ENCODE measurements at regions of chr1 and their contacts with region 1.

Region 1: GRCh38 chr1:150578965-150579798 is at the start of gene MCL1:
- DNase-seq: peak; percentile 95
- H3K4me3 Mint-ChIP-seq: peak within 1 kb of the TSS; percentile 93
- H3K27ac Mint-ChIP-seq: peak within 1 kb of the TSS; percentile 98
- H3K4me1 Mint-ChIP-seq: peaks cover 27% of the 10 kb centered on the region
- H3K27me3 Mint-ChIP-seq: peaks cover 2% of the 10 kb centered on the region
- total RNA-seq, gene MCL1: 280 to 288 TPM

Region 2: DNA sequence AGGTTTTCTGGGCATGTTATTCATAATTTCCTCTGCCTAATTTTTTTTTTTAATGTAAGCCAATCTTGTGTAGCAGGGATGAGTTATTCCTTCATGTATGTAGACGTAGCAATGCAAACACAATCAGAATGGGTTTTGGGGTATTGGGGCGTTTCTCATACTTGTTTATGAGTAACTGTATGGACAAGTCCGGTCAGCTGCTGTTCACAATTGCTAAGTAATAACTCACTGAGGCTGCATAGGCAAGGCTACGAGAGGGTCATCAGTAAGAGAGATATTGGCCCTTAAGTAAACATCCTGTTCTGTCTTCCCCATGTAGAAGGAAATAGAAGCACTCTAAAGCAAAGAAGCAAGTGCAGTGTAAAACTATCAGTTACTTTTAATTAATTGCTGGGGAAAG is 101.4 kb before region 1 on chr1:
- CTCF ChIA-PET with region 1: no interaction called
- POLR2A ChIA-PET with region 1: no interaction called
- intact Hi-C with region 1: no loop called
- DNase-seq: no peak
- H3K4me3 Mint-ChIP-seq: no peak overlapping the region
- H3K27ac Mint-ChIP-seq: no peak overlapping the region
- H3K4me1 Mint-ChIP-seq: peaks cover 11% of the 10 kb centered on the region
- H3K27me3 Mint-ChIP-seq: no peaks in the 10 kb centered on the region

Region 3: GRCh38 chr1:150515328-150516048 is 63.7 kb before region 1 on chr1 and contains the start of gene FALEC:
- CTCF ChIA-PET with region 1: no interaction called
- POLR2A ChIA-PET with region 1: no interaction called
- intact Hi-C with region 1: no loop called
- DNase-seq: peak; percentile 94
- H3K4me3 Mint-ChIP-seq: peak within 1 kb of the TSS; percentile 83
- H3K27ac Mint-ChIP-seq: peak within 1 kb of the TSS; percentile 33
- H3K4me1 Mint-ChIP-seq: peaks cover 11% of the 10 kb centered on the region
- H3K27me3 Mint-ChIP-seq: no peaks in the 10 kb centered on the region
- total RNA-seq, gene FALEC: not detected

Region 4: DNA sequence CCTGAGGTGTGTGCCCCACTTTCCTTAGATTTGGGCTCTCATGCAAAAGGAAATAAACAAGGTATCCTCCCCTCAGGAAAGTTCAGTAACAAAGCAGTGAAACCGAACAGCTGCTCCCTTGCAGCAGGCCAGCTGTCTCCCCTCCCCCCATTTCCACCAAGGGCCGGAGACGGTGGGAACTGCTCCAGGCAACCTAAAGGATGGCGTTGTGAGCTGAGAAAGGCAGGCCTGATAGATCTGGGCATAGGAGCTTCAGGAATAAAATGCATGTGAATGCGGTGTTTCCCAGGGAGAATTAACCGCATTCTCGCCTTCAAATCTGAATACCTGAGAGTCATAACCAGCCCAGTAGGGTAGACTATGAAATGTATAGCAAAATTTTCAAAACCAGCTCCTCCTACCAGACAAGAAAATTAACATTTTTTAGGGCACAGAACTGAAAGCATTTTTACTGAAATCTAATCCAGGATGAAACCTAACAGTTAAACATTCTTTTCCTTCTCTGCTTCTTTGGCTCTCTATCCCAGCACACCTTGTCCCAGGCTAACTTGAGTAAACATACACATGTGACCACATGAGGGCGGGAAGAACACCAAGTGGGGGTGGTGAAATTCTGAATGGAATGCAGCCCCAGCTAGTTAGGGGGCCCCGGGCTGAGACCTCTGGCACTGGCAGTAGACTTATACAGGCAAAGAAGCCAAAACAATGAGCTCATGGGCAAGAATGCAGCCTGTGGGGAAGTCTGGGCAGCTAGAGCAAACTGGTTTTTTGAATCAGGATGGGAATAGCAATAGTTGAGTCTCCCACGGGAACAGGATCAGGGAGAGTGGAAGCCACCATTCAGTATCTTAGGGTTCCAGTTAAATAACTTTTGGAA is 11.2 kb before region 1 on chr1:
- CTCF ChIA-PET with region 1: interaction called, 276 read pairs
- POLR2A ChIA-PET with region 1: interaction called, 527 read pairs
- intact Hi-C with region 1: loop called (anchors 1 kb)
- DNase-seq: peak; percentile 68
- H3K4me3 Mint-ChIP-seq: peak overlapping the region; percentile 69
- H3K27ac Mint-ChIP-seq: peak overlapping the region; percentile 98
- H3K4me1 Mint-ChIP-seq: peaks cover 93% of the 10 kb centered on the region
- H3K27me3 Mint-ChIP-seq: no peaks in the 10 kb centered on the region

Region 5: GRCh38 chr1:150603711-150604110 is 24.5 kb after region 1 on chr1:
- CTCF ChIA-PET with region 1: no interaction called
- POLR2A ChIA-PET with region 1: interaction called, 15 read pairs
- intact Hi-C with region 1: no loop called
- DNase-seq: no peak
- H3K4me3 Mint-ChIP-seq: no peak overlapping the region
- H3K27ac Mint-ChIP-seq: peak overlapping the region; percentile 39
- H3K4me1 Mint-ChIP-seq: peaks cover 18% of the 10 kb centered on the region
- H3K27me3 Mint-ChIP-seq: no peaks in the 10 kb centered on the region

Region 6: GRCh38 chr1:150621497-150622302 is 42.5 kb after region 1 on chr1:
- CTCF ChIA-PET with region 1: interaction called, 8 read pairs
- POLR2A ChIA-PET with region 1: interaction called, 43 read pairs
- intact Hi-C with region 1: no loop called
- DNase-seq: peak; percentile 70
- H3K4me3 Mint-ChIP-seq: no peak overlapping the region
- H3K27ac Mint-ChIP-seq: peak overlapping the region; percentile 84
- H3K4me1 Mint-ChIP-seq: peaks cover 75% of the 10 kb centered on the region
- H3K27me3 Mint-ChIP-seq: no peaks in the 10 kb centered on the region